ENCODE measurements at regions of chr9 and their contacts with region 1.

Region 1: DNA sequence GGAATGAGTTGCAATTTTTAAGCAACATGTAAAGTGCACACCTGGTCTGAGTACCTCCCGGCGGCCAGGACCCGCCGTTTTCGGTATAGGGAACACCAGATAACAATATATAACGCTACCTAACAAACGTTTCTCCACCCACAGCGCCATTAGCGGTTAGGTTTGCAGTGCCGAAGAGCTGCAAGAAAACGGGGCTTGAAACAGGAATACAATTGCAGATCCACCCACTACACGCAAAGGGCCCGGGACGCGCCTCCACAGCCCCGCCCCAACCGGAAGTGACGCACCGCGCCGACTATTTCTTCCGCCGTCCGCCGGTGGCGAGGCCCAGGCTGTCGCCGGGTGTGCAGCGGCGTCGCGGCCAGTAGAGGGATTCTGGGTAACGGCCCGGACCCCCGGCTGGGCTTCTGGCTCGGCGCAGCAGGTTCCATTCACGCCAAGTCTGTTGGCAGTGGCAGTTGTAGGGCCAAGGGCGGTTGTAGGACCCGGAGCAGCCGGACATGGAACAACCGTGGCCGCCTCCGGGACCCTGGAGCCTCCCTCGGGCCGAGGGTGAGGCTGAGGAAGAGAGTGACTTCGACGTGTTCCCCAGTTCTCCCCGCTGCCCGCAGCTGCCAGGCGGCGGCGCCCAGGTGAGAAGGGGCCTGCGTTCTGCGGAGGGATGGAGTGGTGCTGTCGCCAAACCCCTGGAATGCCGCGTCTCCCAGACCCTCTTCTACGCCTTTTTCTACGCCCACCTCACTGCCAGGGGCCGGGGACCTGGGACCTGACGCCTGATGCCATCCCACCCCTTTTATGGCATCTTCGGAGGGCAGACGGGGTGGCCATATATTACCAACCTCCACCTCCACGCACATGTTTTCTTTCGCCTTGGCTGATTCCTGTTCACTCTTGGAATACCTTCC is at the start of gene CDC37L1:
- DNase-seq: peak; percentile 97
- H3K4me3 Mint-ChIP-seq: no peak within 1 kb of the TSS
- H3K27ac Mint-ChIP-seq: no peak within 1 kb of the TSS
- H3K4me1 Mint-ChIP-seq: no peaks in the 10 kb centered on the region
- H3K27me3 Mint-ChIP-seq: no peaks in the 10 kb centered on the region
- CTCF ChIP-seq: peak; percentile 42
- total RNA-seq, gene CDC37L1: 12.1 TPM in 2 replicates

Region 2: DNA sequence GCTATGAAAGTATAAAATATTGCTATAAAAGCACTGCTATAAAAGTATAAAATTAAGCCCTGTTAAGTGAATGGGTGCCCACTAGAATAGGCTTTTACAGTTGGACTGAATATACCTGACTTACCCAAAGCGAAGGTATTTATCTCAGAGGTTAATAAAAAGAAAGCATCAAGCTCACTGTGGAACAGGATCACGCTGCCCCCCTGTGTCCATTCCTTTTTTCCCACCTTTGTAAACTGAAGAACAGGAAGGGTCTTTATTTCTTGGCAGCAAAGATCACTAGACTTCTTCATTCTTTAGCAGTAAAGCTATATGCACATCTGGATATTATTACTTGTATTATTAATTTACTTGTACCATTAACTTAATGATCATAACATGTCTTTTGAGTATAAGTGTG is 39.5 kb before region 1 on chr9:
- CTCF ChIA-PET with region 1: no interaction called
- intact Hi-C with region 1: no loop called
- DNase-seq: peak; percentile 48
- H3K4me3 Mint-ChIP-seq: no peak overlapping the region
- H3K27ac Mint-ChIP-seq: no peak overlapping the region
- H3K4me1 Mint-ChIP-seq: no peaks in the 10 kb centered on the region
- H3K27me3 Mint-ChIP-seq: no peaks in the 10 kb centered on the region
- CTCF ChIP-seq: peak; percentile 35

Region 3: DNA sequence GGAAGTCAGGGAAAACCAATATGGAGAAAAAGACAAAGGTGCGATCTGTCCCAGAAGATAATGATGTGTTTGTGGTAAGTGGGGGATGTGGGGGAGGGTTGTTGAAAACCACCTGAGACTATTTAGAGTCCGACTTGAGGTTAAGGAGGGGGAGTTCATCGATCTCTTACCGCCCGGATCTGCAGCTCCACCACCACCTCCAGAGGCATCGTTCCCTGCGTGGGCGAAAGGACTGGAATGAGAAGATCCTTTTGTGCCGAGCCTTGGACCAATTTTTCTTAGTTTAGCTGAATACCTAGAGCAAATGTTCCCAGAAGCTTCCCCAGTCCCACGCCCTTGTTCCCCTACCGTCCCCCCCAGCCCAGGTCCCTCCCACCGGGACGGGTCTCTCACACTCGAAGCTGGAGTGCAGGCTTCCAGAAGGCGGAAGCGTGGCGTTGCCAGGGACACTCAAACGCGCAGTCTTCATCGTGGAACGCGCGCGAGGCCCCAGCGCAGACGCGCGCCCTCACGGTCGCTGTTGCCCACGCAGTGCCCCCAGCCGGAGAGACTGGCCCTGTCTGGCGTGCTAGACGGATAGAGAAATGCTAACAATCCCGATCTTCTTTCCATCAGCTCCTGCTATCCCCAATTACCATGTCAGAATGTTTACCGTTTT is 13.3 kb before region 1 on chr9 and contains the start of gene SPATA6L:
- CTCF ChIA-PET with region 1: interaction called, 11 read pairs
- intact Hi-C with region 1: no loop called
- DNase-seq: peak; percentile 48
- H3K4me3 Mint-ChIP-seq: peak within 1 kb of the TSS; percentile 79
- H3K27ac Mint-ChIP-seq: peak within 1 kb of the TSS; percentile 98
- H3K4me1 Mint-ChIP-seq: peaks cover 22% of the 10 kb centered on the region
- H3K27me3 Mint-ChIP-seq: no peaks in the 10 kb centered on the region
- CTCF ChIP-seq: no peak
- total RNA-seq, gene SPATA6L: 5.7 and 7.1 TPM in 2 replicates

Region 4: GRCh38 chr9:4741365-4742089 is 62.0 kb after region 1 on chr9:
- CTCF ChIA-PET with region 1: no interaction called
- intact Hi-C with region 1: loop called (anchors 10 kb)
- DNase-seq: no peak
- H3K4me3 Mint-ChIP-seq: peak overlapping the region; percentile 80
- H3K27ac Mint-ChIP-seq: no peak overlapping the region
- H3K4me1 Mint-ChIP-seq: peaks cover 9% of the 10 kb centered on the region
- H3K27me3 Mint-ChIP-seq: no peaks in the 10 kb centered on the region
- CTCF ChIP-seq: no peak